B cell (primary cell): ENCODE measurements at regions of chr6 and their contacts with region 1.

Region 1: GRCh38 chr6:15854826-15855710 is 192.2 kb upstream of the DTNBP1 start:
- DNase-seq: no peak
- ATAC-seq: no peak
- H3K4me3 ChIP-seq: no peak overlapping the region
- H3K4me3 Mint-ChIP-seq: no peak overlapping the region
- H3K27ac ChIP-seq: no peak overlapping the region
- H3K27ac Mint-ChIP-seq: no peak overlapping the region
- H3K4me1 ChIP-seq: no peaks in the 10 kb centered on the region
- H3K4me1 Mint-ChIP-seq: no peaks in the 10 kb centered on the region
- H3K27me3 ChIP-seq: no peaks in the 10 kb centered on the region
- H3K27me3 Mint-ChIP-seq: peaks cover 4% of the 10 kb centered on the region
- CTCF ChIP-seq: no peak

Region 2: DNA sequence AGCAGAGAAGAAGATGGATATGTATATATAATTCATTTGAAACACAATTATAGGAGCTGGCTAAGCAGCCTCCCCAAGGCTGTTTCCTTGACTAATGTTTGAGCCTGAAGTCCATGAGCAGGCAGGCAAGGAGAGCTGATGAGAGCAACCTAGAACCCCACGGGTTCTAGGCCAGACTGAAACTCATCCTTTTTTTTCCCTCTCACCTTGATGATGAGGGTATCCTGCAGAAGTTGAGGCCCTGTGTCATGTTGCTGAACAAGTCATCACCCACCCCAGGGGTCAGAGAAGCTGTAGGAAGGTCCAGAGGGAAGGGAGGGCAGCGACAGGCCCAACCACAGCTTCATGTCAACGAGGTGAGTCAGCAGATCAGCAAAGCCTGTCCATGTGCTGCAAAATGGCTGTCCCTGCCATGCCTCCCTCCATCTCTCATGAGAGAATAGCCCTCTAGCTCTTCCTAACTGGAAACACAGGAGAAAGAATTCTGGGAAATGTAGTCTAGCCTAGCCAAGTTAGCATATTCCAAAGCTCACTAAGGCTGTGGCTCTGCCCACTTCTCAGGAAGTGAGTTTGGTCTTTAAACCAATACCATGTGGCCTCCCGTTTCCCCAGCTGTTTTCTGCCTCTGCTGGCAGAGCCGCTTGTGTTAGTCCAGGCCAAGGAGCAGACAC is 100.9 kb before region 1 on chr6:
- CTCF ChIA-PET with region 1: no interaction called
- POLR2A ChIA-PET with region 1: no interaction called
- intact Hi-C with region 1: no loop called
- DNase-seq: no peak
- ATAC-seq: no peak
- H3K4me3 ChIP-seq: no peak overlapping the region
- H3K4me3 Mint-ChIP-seq: no peak overlapping the region
- H3K27ac ChIP-seq: no peak overlapping the region
- H3K27ac Mint-ChIP-seq: no peak overlapping the region
- H3K4me1 ChIP-seq: no peaks in the 10 kb centered on the region
- H3K4me1 Mint-ChIP-seq: no peaks in the 10 kb centered on the region
- H3K27me3 ChIP-seq: no peaks in the 10 kb centered on the region
- H3K27me3 Mint-ChIP-seq: no peaks in the 10 kb centered on the region
- CTCF ChIP-seq: no peak

Region 3: GRCh38 chr6:16043171-16044135 is 188.4 kb after region 1 on chr6:
- CTCF ChIA-PET with region 1: no interaction called
- POLR2A ChIA-PET with region 1: no interaction called
- intact Hi-C with region 1: loop called (anchors 10 kb)
- DNase-seq: no peak
- ATAC-seq: no peak
- H3K4me3 ChIP-seq: no peak overlapping the region
- H3K4me3 Mint-ChIP-seq: peak overlapping the region; percentile 44
- H3K27ac ChIP-seq: no peak overlapping the region
- H3K27ac Mint-ChIP-seq: no peak overlapping the region
- H3K4me1 ChIP-seq: peaks cover 7 to 11% of the 10 kb centered on the region in 2 donors
- H3K4me1 Mint-ChIP-seq: peaks cover 23% of the 10 kb centered on the region
- H3K27me3 ChIP-seq: no peaks in the 10 kb centered on the region
- H3K27me3 Mint-ChIP-seq: no peaks in the 10 kb centered on the region
- CTCF ChIP-seq: no peak